GM10248 (cell line): ENCODE measurements at regions of chrX and their contacts with region 1.

Region 1: DNA sequence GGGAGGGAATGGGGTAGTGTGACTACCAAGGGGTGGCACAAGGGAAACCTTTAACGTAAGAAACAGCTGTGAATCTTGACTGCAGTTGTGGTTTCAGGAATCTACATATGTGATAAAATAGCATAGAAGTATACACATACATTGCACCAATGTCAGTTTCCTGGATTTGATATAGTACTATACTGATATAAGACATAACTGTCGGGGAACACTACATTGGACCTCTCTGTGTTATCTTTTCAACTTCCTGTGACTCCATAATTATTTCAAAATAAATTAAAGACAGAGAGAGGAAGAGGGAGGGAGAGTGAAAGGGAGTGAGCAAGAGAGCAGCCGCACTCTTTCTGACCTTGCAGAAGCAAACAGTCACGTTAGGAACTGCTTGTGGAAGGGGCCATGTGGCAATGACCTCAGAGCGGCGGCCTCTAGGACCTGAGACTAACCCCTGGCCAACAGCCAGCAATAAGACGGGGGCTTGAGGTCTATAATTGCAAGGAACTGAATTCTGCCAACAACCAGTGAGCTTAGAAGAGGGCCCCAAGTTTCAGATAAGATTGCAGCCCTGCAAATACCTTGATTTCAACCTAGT is 47.4 kb downstream of the NALF2 start:
- DNase-seq: no peak
- CTCF ChIP-seq: no peak

Region 2: GRCh38 chrX:69510137-69510715 is 41.3 kb before region 1 on chrX:
- CTCF ChIA-PET with region 1: no interaction called
- POLR2A ChIA-PET with region 1: no interaction called
- DNase-seq: no peak
- CTCF ChIP-seq: no peak

Region 3: GRCh38 chrX:69523314-69523713 is 28.2 kb before region 1 on chrX:
- CTCF ChIA-PET with region 1: no interaction called
- POLR2A ChIA-PET with region 1: no interaction called
- DNase-seq: no peak
- CTCF ChIP-seq: no peak

Region 4: DNA sequence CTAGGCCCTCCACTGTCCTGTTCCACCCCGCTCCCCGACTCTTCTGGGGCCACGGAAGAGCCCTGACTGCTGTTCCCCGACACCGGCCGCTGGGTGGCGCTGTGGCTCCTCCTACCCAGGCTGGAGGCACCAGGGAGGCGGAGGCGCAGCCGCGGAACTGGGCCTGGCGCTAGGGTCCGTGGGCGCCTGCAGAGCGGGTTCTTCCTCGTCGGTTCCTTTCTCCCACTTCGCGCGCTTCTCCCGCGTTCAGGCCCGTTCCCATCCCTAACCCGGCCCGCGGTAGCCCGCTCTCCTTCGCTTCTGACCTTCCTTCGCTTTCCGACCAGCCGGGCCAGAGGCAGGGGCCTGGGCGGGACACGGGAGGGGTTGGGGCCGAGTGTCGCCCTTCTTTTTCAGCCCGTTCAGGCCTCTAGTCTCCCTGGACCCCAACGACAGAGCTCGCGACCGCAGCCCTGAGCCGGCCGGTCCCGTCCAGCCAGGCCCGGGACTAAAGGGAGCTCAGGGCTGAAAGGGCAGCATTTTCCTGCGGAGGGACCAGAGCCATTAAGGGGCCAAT is 13.1 kb before region 1 on chrX:
- CTCF ChIA-PET with region 1: interaction called, 10 read pairs
- POLR2A ChIA-PET with region 1: no interaction called
- DNase-seq: peak; percentile 74
- CTCF ChIP-seq: peak; percentile 56

Region 5: DNA sequence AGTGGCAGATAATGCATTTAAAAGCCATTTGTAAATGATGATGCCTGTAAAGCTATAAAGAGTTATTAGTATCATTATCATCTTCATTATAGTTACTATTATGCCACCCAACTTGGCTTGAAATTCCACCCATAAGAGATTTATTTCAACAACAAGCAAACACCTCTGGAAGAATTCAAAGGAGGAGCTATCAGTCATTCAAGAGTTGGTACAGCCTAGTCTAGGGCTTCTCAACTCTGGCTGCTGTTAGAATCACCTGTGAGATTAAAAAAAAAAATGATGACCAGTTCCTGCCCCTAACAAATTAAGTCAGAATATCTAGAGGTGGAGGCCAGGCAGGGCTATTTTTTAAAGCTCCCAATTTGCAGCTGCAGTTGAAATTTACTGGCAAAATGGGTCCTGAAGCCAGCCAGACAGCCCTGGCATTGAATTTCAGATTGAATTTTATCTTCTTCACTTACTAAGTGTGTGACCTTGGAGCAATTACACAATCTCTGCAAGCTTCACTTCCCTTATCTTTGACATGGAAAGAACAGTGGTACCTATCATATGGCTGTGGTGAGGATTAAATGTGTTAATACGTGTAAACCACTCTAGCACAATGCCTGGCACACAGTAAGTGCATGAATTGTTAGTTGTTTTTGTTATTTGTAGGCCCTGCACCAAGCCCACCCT is 11.5 kb after region 1 on chrX:
- CTCF ChIA-PET with region 1: no interaction called
- POLR2A ChIA-PET with region 1: no interaction called
- DNase-seq: no peak
- CTCF ChIP-seq: no peak

Region 6: DNA sequence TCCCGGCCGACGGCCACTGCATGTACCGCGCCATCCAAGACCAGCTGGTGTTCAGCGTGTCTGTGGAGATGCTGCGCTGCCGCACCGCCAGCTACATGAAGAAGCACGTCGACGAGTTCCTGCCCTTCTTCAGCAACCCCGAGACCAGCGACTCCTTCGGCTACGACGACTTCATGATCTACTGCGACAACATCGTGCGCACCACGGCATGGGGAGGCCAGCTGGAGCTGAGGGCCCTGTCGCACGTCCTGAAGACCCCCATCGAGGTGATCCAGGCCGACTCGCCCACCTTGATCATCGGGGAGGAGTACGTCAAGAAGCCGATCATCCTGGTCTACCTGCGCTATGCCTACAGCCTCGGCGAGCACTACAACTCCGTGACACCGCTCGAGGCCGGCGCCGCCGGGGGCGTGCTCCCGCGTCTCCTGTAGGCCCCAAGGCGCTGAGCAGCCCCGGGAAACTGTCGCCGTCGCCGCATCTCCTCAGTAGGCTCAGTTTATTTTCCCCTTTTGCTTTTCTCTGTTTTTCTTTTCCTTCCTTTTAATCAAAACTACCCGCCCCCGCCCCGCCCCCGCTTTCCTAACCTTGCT is 511.5 kb after region 1 on chrX:
- CTCF ChIA-PET with region 1: no interaction called
- POLR2A ChIA-PET with region 1: no interaction called
- DNase-seq: no peak
- CTCF ChIP-seq: no peak